OCI-LY7 (cell line): ENCODE measurements at regions of chr12 and their contacts with region 1.

Region 1: DNA sequence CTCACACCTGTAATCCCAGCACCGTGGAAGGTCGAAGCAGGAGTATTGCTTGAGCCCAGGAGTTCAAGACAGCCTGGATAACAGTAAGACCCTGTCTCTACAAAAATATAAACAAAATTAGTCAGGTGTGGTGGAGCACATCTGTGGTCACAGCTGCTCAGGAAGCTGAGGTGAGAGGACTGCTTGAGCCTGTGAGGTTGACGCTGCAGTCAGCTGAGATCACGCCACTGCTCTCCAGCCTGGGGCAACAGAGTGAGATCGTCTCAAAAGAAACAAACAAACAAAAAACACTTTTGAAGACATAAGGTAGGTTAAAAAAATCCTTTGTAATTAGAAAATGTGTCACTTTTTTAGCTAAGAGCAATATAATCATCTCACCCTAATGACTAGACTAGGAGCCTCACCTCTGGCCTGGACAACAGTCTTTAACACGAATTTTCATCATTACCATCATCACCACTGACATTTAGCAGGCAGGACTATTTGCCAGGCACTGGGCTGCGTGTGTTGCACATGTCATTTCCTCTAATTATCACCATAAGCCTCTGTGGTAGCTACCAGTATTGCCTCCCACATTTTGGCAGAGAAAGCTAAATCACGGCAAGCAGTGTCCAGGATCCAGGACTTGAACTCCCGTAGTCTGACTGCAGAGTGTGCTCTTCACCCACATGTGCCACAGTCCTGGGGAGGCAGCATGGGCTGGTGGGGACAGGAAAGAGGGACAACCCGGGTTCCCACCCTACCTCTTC is 4.6 kb upstream of the SYCP3 start:
- DNase-seq: peak; percentile 93
- H3K4me3 ChIP-seq: peak overlapping the region; percentile 47
- H3K27ac ChIP-seq: peak overlapping the region; percentile 95
- H3K4me1 ChIP-seq: peaks cover 66% of the 10 kb centered on the region
- CTCF ChIP-seq: peak; percentile 79

Region 2: DNA sequence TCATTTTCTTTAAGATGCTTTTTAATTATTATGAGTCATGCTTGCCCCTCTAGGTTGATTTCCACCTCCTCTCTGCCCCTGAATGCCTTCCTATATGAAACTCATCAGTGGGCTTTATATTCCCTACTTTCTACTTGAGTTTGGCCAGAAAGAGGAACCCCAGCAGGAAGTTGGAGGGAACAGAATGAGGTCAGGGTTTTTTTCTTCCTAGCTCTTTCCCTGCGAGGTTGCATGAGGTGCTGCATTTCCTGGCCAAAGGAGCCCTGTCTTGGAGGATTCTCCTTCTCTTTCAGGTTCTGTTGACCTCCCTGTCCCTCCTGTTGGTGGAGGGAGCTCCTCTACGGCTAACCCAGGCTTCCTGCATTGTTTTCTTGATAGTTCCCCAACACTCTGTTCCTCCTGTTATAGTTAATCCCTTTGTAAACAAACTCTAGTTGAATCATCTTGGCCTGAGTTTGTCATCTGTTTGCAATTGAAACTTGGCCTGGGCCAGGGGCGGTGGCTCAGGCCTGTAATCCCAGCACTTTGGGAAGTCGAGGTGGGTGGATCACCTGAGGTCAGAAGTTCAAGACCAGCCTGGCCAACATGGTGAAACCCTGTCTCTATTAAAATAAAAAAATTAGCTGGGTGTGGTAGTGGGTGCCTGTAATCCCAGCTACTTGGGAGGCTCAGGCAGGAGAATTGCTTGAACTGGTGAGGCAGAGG is 284.1 kb before region 1 on chr12:
- CTCF ChIA-PET with region 1: no interaction called
- POLR2A ChIA-PET with region 1: no interaction called
- intact Hi-C with region 1: no loop called
- DNase-seq: no peak
- H3K4me3 ChIP-seq: no peak overlapping the region
- H3K27ac ChIP-seq: no peak overlapping the region
- H3K4me1 ChIP-seq: no peaks in the 10 kb centered on the region
- CTCF ChIP-seq: no peak

Region 3: GRCh38 chr12:101490286-101490920 is 253.5 kb before region 1 on chr12:
- CTCF ChIA-PET with region 1: no interaction called
- POLR2A ChIA-PET with region 1: interaction called, 3 read pairs
- intact Hi-C with region 1: loop called (anchors 5 kb)
- DNase-seq: peak; percentile 61
- H3K4me3 ChIP-seq: no peak overlapping the region
- H3K27ac ChIP-seq: no peak overlapping the region
- H3K4me1 ChIP-seq: peaks cover 8% of the 10 kb centered on the region
- CTCF ChIP-seq: peak; percentile 83

Region 4: GRCh38 chr12:101634724-101635123 is 109.2 kb before region 1 on chr12:
- CTCF ChIA-PET with region 1: no interaction called
- POLR2A ChIA-PET with region 1: no interaction called
- intact Hi-C with region 1: loop called (anchors 5 kb)
- DNase-seq: peak; percentile 80
- H3K4me3 ChIP-seq: peak overlapping the region; percentile 15
- H3K27ac ChIP-seq: no peak overlapping the region
- H3K4me1 ChIP-seq: peaks cover 19% of the 10 kb centered on the region
- CTCF ChIP-seq: no peak

Region 5: GRCh38 chr12:101670007-101670687 is 73.8 kb before region 1 on chr12:
- CTCF ChIA-PET with region 1: interaction called, 3 read pairs
- POLR2A ChIA-PET with region 1: no interaction called
- intact Hi-C with region 1: loop called (anchors 2 kb)
- DNase-seq: peak; percentile 75
- H3K4me3 ChIP-seq: no peak overlapping the region
- H3K27ac ChIP-seq: no peak overlapping the region
- H3K4me1 ChIP-seq: peaks cover 25% of the 10 kb centered on the region
- CTCF ChIP-seq: peak; percentile 79

Region 6: GRCh38 chr12:101697197-101697929 is 46.5 kb before region 1 on chr12 and contains the start of gene CHPT1:
- CTCF ChIA-PET with region 1: no interaction called
- POLR2A ChIA-PET with region 1: interaction called, 5 read pairs
- intact Hi-C with region 1: loop called (anchors 1 kb)
- DNase-seq: peak; percentile 83
- H3K4me3 ChIP-seq: peak within 1 kb of the TSS; percentile 80
- H3K27ac ChIP-seq: peak within 1 kb of the TSS; percentile 56
- H3K4me1 ChIP-seq: peaks cover 45% of the 10 kb centered on the region
- CTCF ChIP-seq: no peak
- total RNA-seq, gene CHPT1: 33.6 and 56.6 TPM in 2 replicates

Region 7: GRCh38 chr12:101759396-101760047 is 15.6 kb after region 1 on chr12:
- CTCF ChIA-PET with region 1: interaction called, 3 read pairs
- POLR2A ChIA-PET with region 1: interaction called, 13 read pairs
- intact Hi-C with region 1: no loop called
- DNase-seq: peak; percentile 62
- H3K4me3 ChIP-seq: no peak overlapping the region
- H3K27ac ChIP-seq: no peak overlapping the region
- H3K4me1 ChIP-seq: no peaks in the 10 kb centered on the region
- CTCF ChIP-seq: peak; percentile 94